Right lobe of liver (tissue), 6 donors: ENCODE measurements at regions of chr19 and their contacts with region 1.

Region 1: DNA sequence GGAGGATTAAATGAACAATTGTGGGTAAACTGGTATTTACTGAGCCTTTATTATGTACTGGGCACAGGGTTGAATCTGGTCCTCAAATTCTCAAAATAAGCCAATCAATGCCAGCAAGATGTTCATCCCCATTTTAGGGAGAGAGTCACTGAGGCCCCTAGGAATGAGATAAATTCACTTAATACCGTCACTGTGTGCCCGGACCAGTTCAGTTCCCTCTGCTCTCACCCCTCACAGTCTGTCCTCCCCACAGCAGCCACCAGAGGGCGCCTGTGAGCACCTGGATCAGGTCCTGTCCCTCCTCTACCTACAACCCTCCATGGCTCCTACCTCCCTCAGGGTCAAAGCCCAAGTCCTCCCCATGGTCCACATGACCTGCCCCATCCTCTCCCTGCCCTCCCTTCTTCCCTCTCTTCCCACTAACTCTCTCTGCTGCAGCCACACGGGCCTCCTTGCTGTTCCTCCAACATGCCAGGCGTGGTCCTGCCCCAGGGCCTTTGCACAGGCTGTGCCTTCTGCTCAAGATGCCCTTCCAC is 42.0 kb upstream of the NFIC start:
- DNase-seq: peak in 2 of 3 donors; percentile 63 to 74
- ATAC-seq: peak; percentile 62 to 74 (median 66)
- H3K4me3 ChIP-seq: no peak overlapping the region
- H3K27ac ChIP-seq: no peak overlapping the region
- H3K4me1 ChIP-seq: no peaks in the 10 kb centered on the region
- H3K27me3 ChIP-seq: no peaks in the 10 kb centered on the region
- CTCF ChIP-seq: peak; percentile 70 to 87 (median 82)
- POLR2A ChIP-seq: no peak

Region 2: DNA sequence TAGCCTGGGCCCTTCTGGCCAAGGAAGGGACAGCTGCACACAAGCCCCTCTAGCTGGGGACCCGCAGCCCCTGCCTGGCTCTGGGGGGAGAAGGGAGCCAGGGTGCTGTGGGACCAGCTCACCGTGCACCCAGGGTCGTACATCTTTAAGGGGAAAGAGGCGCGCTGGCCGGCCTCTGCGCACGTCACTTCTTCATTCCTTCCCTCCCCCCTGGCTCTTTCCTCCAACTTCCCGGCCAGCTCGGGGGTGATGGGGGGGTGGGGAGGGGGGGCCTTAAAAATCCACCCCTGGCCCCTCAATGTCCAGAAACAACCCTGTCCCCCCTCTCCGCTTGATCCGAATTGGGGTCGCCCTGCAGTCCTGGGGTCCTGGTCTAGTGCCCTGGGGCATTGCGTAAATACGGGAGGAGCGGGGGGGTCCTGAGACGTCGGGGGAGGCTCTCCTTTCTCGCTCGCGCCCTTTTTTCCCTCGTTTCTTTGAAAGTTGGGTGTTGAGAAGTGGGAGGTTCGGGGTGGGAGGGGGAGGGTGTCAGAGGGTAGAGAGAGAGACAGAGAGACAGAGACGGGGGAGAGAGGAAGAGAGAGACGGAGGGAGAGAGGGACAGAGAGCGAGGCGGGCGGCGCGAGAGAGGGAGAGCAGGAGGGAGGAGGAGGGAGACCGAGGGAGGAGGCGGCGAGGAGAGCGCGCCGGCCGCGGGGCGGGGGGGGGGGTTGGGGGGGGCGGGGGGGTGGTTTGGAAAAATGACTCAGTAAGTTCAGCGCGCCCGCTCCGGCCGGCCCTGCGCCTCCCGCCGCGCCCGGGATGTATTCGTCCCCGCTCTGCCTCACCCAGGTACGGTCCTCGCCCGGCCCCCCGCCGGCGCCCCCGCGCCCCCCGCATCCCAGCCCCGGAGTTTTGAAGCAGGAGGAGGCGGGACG is 41.7 kb after region 1 on chr19 and contains the start of gene NFIC:
- intact Hi-C with region 1: no loop called
- DNase-seq: peak; percentile 80 to 87 (median 86)
- ATAC-seq: peak; percentile 49 to 65 (median 56)
- H3K4me3 ChIP-seq: peak within 1 kb of the TSS; percentile 81 to 90 (median 90)
- H3K27ac ChIP-seq: peak within 1 kb of the TSS; percentile 89 to 97 (median 95)
- H3K4me1 ChIP-seq: peaks cover 0 to 23% (median 5%) of the 10 kb centered on the region in 4 donors
- H3K27me3 ChIP-seq: no peaks in the 10 kb centered on the region
- CTCF ChIP-seq: no peak
- POLR2A ChIP-seq: peak; percentile 41
- total RNA-seq, gene NFIC: 94.6 to 168 (median 120) TPM

Region 3: GRCh38 chr19:3434712-3435553 is 110.5 kb after region 1 on chr19:
- intact Hi-C with region 1: loop called in 1 of 2 experiments (anchors 10 kb)
- DNase-seq: peak; percentile 85 to 93 (median 93)
- ATAC-seq: peak; percentile 68 to 82 (median 72)
- H3K4me3 ChIP-seq: peak overlapping the region; percentile 12 to 40 (median 21)
- H3K27ac ChIP-seq: peak overlapping the region; percentile 70 to 81 (median 77)
- H3K4me1 ChIP-seq: peaks cover 0 to 33% (median 11%) of the 10 kb centered on the region in 4 donors
- H3K27me3 ChIP-seq: no peaks in the 10 kb centered on the region
- CTCF ChIP-seq: no peak
- POLR2A ChIP-seq: no peak

Region 4: GRCh38 chr19:3479177-3479833 is 154.9 kb after region 1 on chr19:
- intact Hi-C with region 1: loop called (anchors 5 kb)
- DNase-seq: no peak
- ATAC-seq: peak in 1 of 4 donors; percentile 12
- H3K4me3 ChIP-seq: no peak overlapping the region
- H3K27ac ChIP-seq: no peak overlapping the region
- H3K4me1 ChIP-seq: peaks cover 0 to 4% (median 0%) of the 10 kb centered on the region in 4 donors
- H3K27me3 ChIP-seq: peaks cover 0 to 4% of the 10 kb centered on the region in 2 donors
- CTCF ChIP-seq: no peak
- POLR2A ChIP-seq: no peak